Left ventricle myocardium superior (tissue), 1 donor: ENCODE measurements at regions of chr6 and their contacts with region 1.

Region 1: DNA sequence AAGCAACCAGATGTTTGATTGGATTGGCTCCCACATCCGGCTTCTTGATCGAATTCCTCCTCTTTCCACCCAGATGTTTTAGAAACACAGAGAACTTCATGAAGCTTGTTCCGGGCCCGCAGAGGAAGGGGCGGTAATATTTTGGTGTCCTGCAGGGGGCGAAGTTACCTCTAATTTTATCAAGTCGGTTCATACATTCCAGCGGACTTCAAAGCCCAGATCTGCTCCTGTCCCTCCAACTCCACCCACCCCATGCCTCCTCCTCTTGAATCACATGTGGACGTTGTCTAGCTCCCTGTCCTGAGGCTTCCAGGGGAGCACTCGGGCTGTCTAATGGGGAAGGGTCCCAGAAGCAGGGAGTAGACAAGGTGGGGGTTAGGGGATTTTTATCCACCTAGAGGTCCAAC is 2.9 kb upstream of the BMP6 start:
- DNase-seq: peak; percentile 85
- ATAC-seq: peak; percentile 60

Region 2: DNA sequence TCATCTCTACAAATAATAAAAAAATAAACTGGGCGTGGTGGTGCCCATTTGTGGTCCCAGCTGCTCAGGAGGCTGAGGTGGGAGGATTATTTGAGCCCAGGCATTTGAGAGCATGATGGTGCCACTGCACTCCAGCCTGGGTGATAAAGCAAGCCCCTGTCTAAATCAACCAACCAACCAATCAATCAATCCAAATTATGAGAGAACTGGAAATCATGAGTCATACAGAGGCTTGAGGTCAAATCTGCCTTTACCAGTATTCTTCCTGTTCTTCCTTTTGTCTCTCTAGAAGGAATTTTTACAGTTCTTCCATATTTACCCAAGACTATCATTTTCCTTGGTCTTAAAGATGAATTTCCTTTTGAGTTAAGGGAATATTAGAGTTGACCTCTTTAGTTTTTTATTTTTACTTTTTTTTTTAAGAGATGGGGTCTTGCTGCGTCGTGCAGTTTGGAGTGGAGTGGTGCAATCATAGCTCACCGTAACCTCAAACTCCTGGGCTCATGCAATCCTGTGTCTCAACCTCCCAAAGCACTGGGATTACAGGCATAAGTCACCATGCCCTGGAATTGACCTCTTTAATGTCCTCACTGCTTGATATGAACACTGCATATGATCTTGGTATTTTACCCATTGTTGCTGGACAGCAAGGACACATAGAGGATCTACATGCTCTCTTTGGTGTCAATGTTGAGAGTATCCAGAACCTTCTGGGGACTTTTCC is 231.6 kb after region 1 on chr6:
- intact Hi-C with region 1: no loop called
- DNase-seq: no peak
- ATAC-seq: no peak

Region 3: GRCh38 chr6:7992002-7992815 is 269.2 kb after region 1 on chr6:
- intact Hi-C with region 1: loop called (anchors 5 kb)
- DNase-seq: peak; percentile 39
- ATAC-seq: peak; percentile 89

Region 4: GRCh38 chr6:8059129-8059528 is 336.1 kb after region 1 on chr6:
- intact Hi-C with region 1: loop called (anchors 2 kb)
- DNase-seq: no peak
- ATAC-seq: no peak